A549 (cell line): ENCODE measurements at regions of chr20 and their contacts with region 1.

Region 1: GRCh38 chr20:46139908-46140482 is 21.9 kb downstream of the CD40 start:
- DNase-seq: no peak
- ATAC-seq: no peak
- H3K4me3 ChIP-seq: no peak overlapping the region
- H3K27ac ChIP-seq: no peak overlapping the region
- H3K4me1 ChIP-seq: no peaks in the 10 kb centered on the region
- CTCF ChIP-seq: no peak
- EP300 ChIP-seq: no peak
- POLR2A ChIP-seq: no peak
- RAD21 ChIP-seq: no peak

Region 2: GRCh38 chr20:46151936-46152335 is 11.9 kb after region 1 on chr20:
- CTCF ChIA-PET with region 1: interaction called, 10 read pairs
- POLR2A ChIA-PET with region 1: no interaction called
- DNase-seq: peak; percentile 14 to 68
- ATAC-seq: peak in 1 of 2 experiments; percentile 87; a peak in 3 of 6 replicates
- H3K4me3 ChIP-seq: no peak overlapping the region
- H3K27ac ChIP-seq: no peak overlapping the region
- H3K4me1 ChIP-seq: no peaks in the 10 kb centered on the region
- CTCF ChIP-seq: peak; percentile 42
- EP300 ChIP-seq: no peak
- POLR2A ChIP-seq: no peak
- RAD21 ChIP-seq: 0 out of 5 replicates have a peak, but pooled peaks of 1 of the 2 experiments have one; percentile 17